RWPE1 (cell line): ENCODE measurements at regions of chr5 and their contacts with region 1.

Region 1: DNA sequence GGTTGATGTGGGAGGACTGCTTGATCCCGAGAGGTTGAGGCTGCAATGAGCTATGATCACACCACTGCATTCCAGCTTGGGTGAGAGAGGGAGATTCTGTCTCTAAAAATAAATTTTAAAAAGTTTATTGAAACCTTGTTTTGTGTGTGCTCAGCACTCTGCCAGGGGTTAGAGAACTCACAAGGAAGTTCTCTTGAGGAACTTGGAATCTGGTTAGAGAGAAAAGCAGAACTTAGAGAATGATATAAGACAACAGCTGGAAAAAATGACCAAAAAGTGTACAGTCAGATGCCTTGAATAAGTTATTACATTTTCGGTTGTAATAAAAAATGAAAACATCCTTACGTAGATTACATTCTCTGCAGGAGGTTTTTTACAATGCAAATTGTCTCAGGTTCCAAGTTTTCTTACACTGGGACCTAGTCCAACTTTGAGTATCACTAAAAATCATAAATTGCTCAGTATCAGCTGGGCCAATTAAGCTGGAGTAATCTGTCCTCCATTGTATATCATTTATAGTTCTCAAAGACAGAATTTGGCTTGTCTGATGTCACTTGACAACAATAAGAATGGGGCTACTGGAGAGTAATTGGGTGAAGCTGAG is 21.7 kb upstream of the TENT2 start:
- DNase-seq: no peak
- H3K27ac ChIP-seq: no peak overlapping the region
- CTCF ChIP-seq: no peak

Region 2: GRCh38 chr5:79122973-79123372 is 467.5 kb before region 1 on chr5:
- CTCF ChIA-PET with region 1: no interaction called
- POLR2A ChIA-PET with region 1: interaction called, 17 read pairs
- DNase-seq: no peak
- H3K27ac ChIP-seq: no peak overlapping the region
- CTCF ChIP-seq: no peak

Region 3: DNA sequence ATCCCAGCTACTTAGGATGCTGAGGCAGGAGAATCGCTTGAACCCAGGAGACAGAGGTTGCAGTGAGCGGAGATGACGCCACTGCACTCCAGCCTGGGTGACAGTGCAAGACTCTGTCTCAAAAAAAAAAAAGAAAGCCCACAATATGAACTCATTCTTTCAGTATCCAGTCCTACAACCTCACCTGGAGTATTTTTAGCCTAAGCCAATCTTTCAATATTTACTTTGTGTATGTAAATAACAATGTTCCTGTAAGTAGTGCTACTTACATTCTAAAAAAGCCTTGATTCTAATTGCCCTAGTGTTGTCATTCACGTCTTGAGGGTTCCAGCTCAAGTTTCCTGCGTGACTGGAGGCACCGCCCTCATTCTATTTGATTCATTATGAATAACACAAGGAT is 416.9 kb before region 1 on chr5:
- CTCF ChIA-PET with region 1: no interaction called
- POLR2A ChIA-PET with region 1: no interaction called
- DNase-seq: peak; percentile 36
- H3K27ac ChIP-seq: no peak overlapping the region
- CTCF ChIP-seq: no peak

Region 4: DNA sequence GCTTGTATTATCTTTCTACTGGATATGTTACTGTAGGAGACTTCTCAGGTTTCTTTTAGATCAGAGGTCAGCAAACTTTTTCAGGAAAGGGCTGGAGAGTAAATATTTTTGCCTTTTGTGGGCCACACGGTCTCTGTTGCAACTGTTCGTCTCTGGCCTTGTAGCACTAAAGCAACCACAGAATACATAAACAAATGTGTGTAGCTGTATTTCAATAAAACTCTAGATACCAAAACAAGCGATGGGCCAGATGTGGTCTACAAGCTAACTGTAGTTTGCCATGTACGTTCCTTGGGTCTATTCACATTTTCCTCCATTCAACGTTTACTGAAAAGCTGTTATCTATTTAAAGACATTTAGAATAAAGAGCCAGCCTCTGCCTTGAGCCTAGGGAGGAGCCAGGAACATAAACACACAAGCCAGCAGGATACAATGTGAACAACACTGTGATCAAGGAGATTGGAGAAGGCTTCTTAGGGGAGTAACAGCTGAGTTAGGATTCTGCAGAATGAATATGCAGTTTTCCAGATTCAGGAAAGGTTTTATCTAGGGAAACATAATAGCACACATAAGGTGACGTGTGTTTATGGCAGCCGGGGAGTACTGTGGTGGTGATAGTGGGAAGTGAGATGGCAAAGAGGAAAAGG is 43.6 kb before region 1 on chr5:
- CTCF ChIA-PET with region 1: no interaction called
- POLR2A ChIA-PET with region 1: no interaction called
- DNase-seq: no peak
- H3K27ac ChIP-seq: no peak overlapping the region
- CTCF ChIP-seq: no peak

Region 5: DNA sequence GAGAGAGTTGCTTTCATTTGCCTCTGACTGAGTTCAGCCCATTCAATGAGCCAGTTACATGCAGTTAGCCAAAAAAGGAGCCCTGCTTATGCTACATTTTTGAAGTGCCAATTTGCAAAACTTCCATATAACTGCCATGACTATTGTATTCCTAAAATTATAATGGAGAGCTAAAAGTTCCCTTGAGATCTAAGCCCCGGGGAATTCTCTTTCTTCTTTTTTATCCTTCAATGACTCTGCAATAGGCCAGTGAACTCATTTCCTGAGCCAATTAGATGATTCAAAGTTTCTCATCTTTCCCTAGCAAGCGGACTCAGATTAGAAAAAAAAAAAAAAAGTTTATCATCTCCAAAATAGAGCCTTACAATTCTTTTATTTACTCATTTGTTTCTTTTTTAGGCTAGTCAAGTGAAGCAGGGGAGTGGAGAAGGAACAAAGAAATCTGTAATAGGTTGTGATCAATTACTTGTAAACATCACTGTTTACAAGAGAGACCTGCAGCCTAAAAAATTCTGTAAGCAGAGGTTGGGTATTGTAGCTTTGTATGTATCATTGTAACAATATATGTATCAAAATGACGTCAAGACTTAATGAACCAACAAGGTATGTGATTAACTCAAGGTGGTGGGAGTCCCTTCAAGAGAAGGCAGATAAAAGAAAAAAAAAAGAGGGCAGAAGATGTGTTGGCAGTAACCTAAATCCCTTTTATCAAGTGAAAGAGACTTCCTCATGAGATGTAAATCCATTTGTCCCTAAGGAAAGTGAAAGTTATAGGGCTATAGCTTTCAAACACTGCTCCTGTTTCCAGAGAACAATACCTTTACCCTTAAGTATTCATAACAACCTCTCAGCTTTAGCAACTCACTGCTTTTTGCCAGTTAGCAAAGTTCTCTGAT is 27.9 kb before region 1 on chr5:
- CTCF ChIA-PET with region 1: no interaction called
- POLR2A ChIA-PET with region 1: no interaction called
- DNase-seq: peak; percentile 37
- H3K27ac ChIP-seq: no peak overlapping the region
- CTCF ChIP-seq: no peak